Left ventricle myocardium inferior (tissue), 1 donor: ENCODE measurements at regions of chrX and their contacts with region 1.

Region 1: GRCh38 chrX:24034485-24034884 is 7.5 kb upstream of the KLHL15 start:
- DNase-seq: no peak
- H3K4me3 ChIP-seq: no peak overlapping the region
- H3K27ac ChIP-seq: no peak overlapping the region
- H3K4me1 ChIP-seq: no peaks in the 10 kb centered on the region
- H3K27me3 ChIP-seq: no peaks in the 10 kb centered on the region
- CTCF ChIP-seq: no peak

Region 2: DNA sequence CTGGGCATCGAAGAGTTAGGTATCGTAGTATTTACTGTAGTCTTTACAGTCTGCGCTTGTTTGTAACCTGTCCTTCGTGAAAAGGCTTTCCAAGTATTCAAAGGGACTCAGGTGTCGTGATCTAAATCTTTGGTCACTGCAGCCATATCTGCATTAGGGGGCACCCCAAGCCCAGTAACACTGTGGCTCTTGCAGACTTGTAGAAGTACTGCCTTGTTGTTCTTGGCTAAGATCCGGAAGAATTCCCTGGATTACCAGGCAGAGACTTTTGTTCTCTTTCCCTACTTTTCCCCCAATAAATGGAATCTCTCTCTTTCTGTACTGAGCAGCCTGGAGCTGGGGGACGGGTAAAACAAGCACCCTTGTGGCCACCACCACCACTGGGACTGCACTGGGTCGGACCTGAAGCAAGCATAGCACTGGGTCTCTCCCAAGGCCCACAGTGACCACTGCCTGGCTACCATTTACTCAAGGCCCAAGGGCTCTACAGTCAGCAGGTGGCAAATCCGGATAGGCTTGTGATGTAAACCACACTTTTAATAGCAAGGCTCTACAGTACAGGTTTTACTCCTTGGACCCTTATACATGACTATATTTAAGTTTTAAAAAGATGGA is 114.7 kb before region 1 on chrX:
- intact Hi-C with region 1: loop called (anchors 10 kb)
- DNase-seq: no peak
- H3K4me3 ChIP-seq: no peak overlapping the region
- H3K27ac ChIP-seq: no peak overlapping the region
- H3K4me1 ChIP-seq: no peaks in the 10 kb centered on the region
- H3K27me3 ChIP-seq: no peaks in the 10 kb centered on the region
- CTCF ChIP-seq: no peak

Region 3: GRCh38 chrX:24184018-24184417 is 149.5 kb after region 1 on chrX:
- intact Hi-C with region 1: no loop called
- DNase-seq: no peak
- H3K4me3 ChIP-seq: no peak overlapping the region
- H3K27ac ChIP-seq: no peak overlapping the region
- H3K4me1 ChIP-seq: no peaks in the 10 kb centered on the region
- H3K27me3 ChIP-seq: no peaks in the 10 kb centered on the region
- CTCF ChIP-seq: no peak